Activated B cell treated with CpG ODN at 0.5 μM for 24 hours (primary cell): ENCODE measurements at regions of chr4 and their contacts with region 1.

Region 1: DNA sequence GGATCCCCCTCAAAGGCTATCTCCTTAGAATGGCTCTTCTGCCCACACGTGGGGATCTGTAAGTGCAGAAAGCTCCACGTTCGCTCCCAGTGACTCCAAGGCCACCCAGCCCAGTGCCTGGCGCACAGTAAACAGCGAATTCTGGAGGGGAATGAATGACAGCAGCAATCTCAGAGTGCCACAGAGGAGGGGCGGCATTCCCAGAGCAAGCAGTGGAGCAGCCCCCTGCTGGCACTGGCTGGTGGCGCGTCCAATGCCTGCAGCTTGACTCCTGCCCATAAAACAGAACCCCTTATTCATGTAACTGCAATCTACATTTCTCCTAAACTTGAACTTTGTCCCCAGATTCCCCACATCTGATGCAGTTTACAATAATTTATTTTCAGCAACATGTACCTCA is 6.9 kb upstream of the HELT start:
- DNase-seq: no peak
- ATAC-seq: no peak
- H3K4me3 Mint-ChIP-seq: no peak overlapping the region
- H3K27ac Mint-ChIP-seq: no peak overlapping the region
- H3K4me1 Mint-ChIP-seq: peaks cover 3% of the 10 kb centered on the region
- H3K27me3 Mint-ChIP-seq: peaks cover 67% of the 10 kb centered on the region
- CTCF ChIP-seq: no peak

Region 2: GRCh38 chr4:183905081-183905592 is 1106.3 kb before region 1 on chr4 and contains the start of gene STOX2:
- CTCF ChIA-PET with region 1: no interaction called
- POLR2A ChIA-PET with region 1: no interaction called
- intact Hi-C with region 1: loop called (anchors 10 kb)
- DNase-seq: no peak
- ATAC-seq: no peak
- H3K4me3 Mint-ChIP-seq: no peak within 1 kb of the TSS
- H3K27ac Mint-ChIP-seq: no peak within 1 kb of the TSS
- H3K4me1 Mint-ChIP-seq: peaks cover 9% of the 10 kb centered on the region
- H3K27me3 Mint-ChIP-seq: peaks cover 45% of the 10 kb centered on the region
- CTCF ChIP-seq: no peak
- total RNA-seq, gene STOX2: not detected in 2 replicates

Region 3: GRCh38 chr4:185395956-185396723 is 384.7 kb after region 1 on chr4:
- CTCF ChIA-PET with region 1: no interaction called
- POLR2A ChIA-PET with region 1: no interaction called
- intact Hi-C with region 1: no loop called
- DNase-seq: peak; percentile 98
- ATAC-seq: peak; percentile 89
- H3K4me3 Mint-ChIP-seq: peak overlapping the region; percentile 94
- H3K27ac Mint-ChIP-seq: peak overlapping the region; percentile 94
- H3K4me1 Mint-ChIP-seq: peaks cover 63% of the 10 kb centered on the region
- H3K27me3 Mint-ChIP-seq: no peaks in the 10 kb centered on the region
- CTCF ChIP-seq: no peak